ENCODE measurements at regions of chr4 and their contacts with region 1.

Region 1: DNA sequence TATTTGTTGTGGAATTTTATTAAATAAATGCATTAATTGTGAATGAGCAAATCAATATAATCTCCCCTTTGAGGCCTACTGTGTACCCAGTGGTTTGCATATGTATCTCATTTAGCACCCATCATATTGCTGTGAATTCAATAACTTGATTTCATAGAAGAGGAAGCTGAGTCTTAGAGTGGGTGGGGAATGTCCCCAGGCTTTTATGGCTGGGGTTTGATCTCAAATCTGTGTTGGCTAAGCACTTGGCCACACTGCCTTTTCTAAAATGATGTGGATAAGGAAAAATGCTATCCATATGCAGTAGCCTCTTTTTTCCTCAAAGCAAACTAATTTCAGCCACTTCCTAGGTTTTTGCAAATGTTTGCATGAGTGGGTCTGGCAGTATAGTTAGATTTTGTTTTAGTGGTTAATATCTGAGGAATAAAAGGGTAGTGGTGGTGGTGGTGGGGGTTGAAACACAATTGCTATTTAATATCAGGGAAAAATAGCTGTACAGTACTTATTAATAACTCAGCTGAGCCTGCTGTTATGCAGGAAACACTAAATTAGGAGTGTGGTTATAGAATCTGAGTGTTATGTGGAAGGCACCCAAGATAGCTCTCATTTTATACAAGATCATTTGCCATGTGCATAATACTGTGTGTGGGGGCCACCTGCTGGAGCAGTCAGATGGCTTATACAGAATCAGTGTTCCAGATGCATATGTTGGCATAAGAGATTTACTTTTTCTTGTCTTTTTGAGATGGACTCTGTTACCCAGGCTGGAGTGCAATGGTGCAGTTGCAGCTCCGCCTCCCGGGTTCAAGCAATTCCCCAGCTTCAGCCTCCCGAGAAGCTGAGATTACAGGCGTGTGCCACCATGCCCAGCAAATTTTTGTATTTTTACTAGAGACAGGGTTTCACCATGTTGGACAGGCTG is 108.0 kb downstream of the TMEM131L start:
- DNase-seq: peak; percentile 85
- H3K4me3 ChIP-seq: no peak overlapping the region
- H3K27ac ChIP-seq: no peak overlapping the region
- H3K4me1 ChIP-seq: peaks cover 2% of the 10 kb centered on the region
- H3K27me3 ChIP-seq: no peaks in the 10 kb centered on the region
- CTCF ChIP-seq: peak; percentile 46 to 59
- POLR2A ChIP-seq: no peak

Region 2: GRCh38 chr4:153142700-153143438 is 431.3 kb before region 1 on chr4:
- CTCF ChIA-PET with region 1: interaction called, 61 read pairs
- POLR2A ChIA-PET with region 1: no interaction called
- dilution Hi-C with region 1: no loop called
- intact Hi-C with region 1: loop called (anchors 1 kb)
- DNase-seq: peak; percentile 79
- H3K4me3 ChIP-seq: no peak overlapping the region
- H3K27ac ChIP-seq: no peak overlapping the region
- H3K4me1 ChIP-seq: peaks cover 14% of the 10 kb centered on the region
- H3K27me3 ChIP-seq: no peaks in the 10 kb centered on the region
- CTCF ChIP-seq: peak; percentile 80
- POLR2A ChIP-seq: no peak

Region 3: GRCh38 chr4:153318696-153319320 is 255.3 kb before region 1 on chr4:
- CTCF ChIA-PET with region 1: interaction called, 19 read pairs
- POLR2A ChIA-PET with region 1: no interaction called
- dilution Hi-C with region 1: no loop called
- intact Hi-C with region 1: loop called (anchors 2 kb)
- DNase-seq: peak; percentile 62
- H3K4me3 ChIP-seq: no peak overlapping the region
- H3K27ac ChIP-seq: no peak overlapping the region
- H3K4me1 ChIP-seq: no peaks in the 10 kb centered on the region
- H3K27me3 ChIP-seq: no peaks in the 10 kb centered on the region
- CTCF ChIP-seq: peak; percentile 55 to 62
- POLR2A ChIP-seq: no peak

Region 4: DNA sequence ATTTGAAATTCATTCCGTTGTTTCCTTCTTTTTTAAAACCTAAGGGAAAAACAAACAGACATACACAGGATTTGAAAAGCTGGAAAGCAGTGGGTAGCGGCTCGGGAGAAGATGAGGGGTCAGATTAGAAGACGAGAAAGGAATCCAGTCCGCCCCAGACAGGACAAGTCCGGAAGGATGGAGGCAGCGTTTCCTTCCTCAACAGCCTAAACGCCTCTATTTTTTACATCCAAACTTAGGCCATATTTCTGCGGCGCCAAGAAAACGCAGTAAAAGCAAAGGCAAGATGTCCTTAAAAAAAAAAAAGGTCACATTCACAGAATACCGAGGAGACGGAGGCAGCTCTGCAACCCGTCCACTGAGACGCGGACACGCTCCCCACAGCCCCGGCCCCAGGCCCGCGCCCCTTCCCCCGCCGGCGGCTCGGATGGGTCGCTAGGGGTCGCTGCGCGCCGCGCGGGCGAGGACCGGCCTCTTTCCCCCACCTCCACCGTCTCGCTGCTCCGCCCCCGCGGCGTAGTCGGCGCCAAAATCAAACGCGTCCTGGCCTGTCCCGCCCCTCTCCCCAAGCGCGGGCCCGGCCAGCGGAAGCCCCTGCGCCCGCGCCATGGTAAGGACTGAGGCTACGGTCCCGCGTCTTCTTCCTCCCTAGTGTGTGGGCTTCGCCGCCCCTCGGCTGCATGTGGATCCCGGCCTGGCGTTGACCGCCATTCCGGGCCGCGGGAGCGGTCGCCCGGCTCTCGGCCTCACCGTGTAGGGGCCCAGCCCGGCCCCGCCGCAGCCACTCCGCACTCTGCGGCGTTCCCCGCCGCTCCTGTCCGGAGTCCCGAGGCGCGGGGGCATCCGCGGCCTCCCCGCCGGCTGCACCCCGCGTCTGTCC is 229.8 kb before region 1 on chr4 and contains the start of gene MND1:
- CTCF ChIA-PET with region 1: interaction called, 129 read pairs
- POLR2A ChIA-PET with region 1: no interaction called
- dilution Hi-C with region 1: no loop called
- intact Hi-C with region 1: loop called (anchors 1 kb)
- DNase-seq: peak; percentile 77
- H3K4me3 ChIP-seq: peak within 1 kb of the TSS; percentile 54 to 82 (median 76)
- H3K27ac ChIP-seq: peak within 1 kb of the TSS; percentile 78
- H3K4me1 ChIP-seq: peaks cover 25% of the 10 kb centered on the region
- H3K27me3 ChIP-seq: no peaks in the 10 kb centered on the region
- CTCF ChIP-seq: peak; percentile 77 to 87
- POLR2A ChIP-seq: no peak
- total RNA-seq, gene MND1: 7.7 and 8.2 TPM in 2 replicates

Region 5: GRCh38 chr4:153438916-153439756 is 135.0 kb before region 1 on chr4:
- CTCF ChIA-PET with region 1: interaction called, 33 read pairs
- POLR2A ChIA-PET with region 1: no interaction called
- dilution Hi-C with region 1: no loop called
- intact Hi-C with region 1: no loop called
- DNase-seq: no peak
- H3K4me3 ChIP-seq: no peak overlapping the region
- H3K27ac ChIP-seq: no peak overlapping the region
- H3K4me1 ChIP-seq: no peaks in the 10 kb centered on the region
- H3K27me3 ChIP-seq: no peaks in the 10 kb centered on the region
- CTCF ChIP-seq: no peak
- POLR2A ChIP-seq: no peak

Region 6: GRCh38 chr4:153531000-153531358 is 43.2 kb before region 1 on chr4:
- CTCF ChIA-PET with region 1: interaction called, 18 read pairs
- POLR2A ChIA-PET with region 1: no interaction called
- dilution Hi-C with region 1: no loop called
- intact Hi-C with region 1: no loop called
- DNase-seq: no peak
- H3K4me3 ChIP-seq: no peak overlapping the region
- H3K27ac ChIP-seq: no peak overlapping the region
- H3K4me1 ChIP-seq: peaks cover 25% of the 10 kb centered on the region
- H3K27me3 ChIP-seq: no peaks in the 10 kb centered on the region
- CTCF ChIP-seq: peak in 1 of 2 donors; percentile 1
- POLR2A ChIP-seq: no peak

Region 7: DNA sequence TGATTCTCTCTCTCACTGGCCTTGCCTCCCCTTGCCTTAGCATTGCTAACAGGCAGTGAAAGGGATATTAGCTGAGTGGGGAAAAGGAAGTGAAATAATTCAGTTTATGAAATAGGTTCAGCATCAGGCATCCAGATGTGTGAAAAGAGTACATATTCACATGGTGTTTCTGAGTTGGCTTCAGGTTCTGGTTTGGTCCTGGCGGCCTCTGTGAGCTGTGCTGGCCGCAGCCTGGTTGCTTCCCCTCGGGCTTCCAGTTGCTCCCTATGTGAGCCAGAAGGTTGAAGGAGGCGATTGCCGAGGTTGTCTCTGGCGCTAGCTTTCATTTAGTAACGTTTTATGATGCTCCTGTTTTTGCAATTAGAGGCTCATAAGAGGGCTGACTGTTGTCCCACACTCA is 10.9 kb after region 1 on chr4:
- CTCF ChIA-PET with region 1: interaction called, 17 read pairs
- POLR2A ChIA-PET with region 1: no interaction called
- dilution Hi-C with region 1: no loop called
- intact Hi-C with region 1: no loop called
- DNase-seq: no peak
- H3K4me3 ChIP-seq: no peak overlapping the region
- H3K27ac ChIP-seq: no peak overlapping the region
- H3K4me1 ChIP-seq: no peaks in the 10 kb centered on the region
- H3K27me3 ChIP-seq: no peaks in the 10 kb centered on the region
- CTCF ChIP-seq: no peak
- POLR2A ChIP-seq: no peak

Region 8: DNA sequence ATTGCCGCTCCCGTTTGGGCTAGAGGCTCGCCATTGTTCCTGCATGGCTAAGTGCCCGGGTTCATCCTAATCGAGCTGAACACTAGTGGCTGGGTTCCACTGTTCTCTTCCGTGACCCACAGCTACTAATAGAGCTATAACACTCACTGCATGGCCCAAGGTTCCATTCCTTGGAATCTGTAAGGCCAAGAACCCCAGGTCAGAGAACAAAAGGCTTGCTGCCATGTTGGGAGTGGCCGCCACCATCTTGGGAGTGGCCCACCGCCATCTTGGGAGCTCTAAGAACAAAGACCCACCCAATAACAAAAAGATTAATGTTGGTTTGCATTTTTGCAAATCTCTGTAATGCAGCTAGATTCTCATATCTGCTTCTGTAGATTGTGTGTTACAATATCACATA is 618.4 kb after region 1 on chr4:
- CTCF ChIA-PET with region 1: no interaction called
- POLR2A ChIA-PET with region 1: no interaction called
- dilution Hi-C with region 1: no loop called
- intact Hi-C with region 1: no loop called
- DNase-seq: no peak
- H3K4me3 ChIP-seq: no peak overlapping the region
- H3K27ac ChIP-seq: no peak overlapping the region
- H3K4me1 ChIP-seq: no peaks in the 10 kb centered on the region
- H3K27me3 ChIP-seq: no peaks in the 10 kb centered on the region
- CTCF ChIP-seq: no peak
- POLR2A ChIP-seq: no peak